OCI-LY7 (cell line): ENCODE measurements at regions of chr1 and their contacts with region 1.

Region 1: GRCh38 chr1:204806943-204807687 is 63.5 kb upstream of the NFASC start:
- DNase-seq: peak; percentile 91
- H3K4me3 ChIP-seq: peak overlapping the region; percentile 70
- H3K27ac ChIP-seq: no peak overlapping the region
- H3K4me1 ChIP-seq: peaks cover 27% of the 10 kb centered on the region
- CTCF ChIP-seq: peak; percentile 100

Region 2: DNA sequence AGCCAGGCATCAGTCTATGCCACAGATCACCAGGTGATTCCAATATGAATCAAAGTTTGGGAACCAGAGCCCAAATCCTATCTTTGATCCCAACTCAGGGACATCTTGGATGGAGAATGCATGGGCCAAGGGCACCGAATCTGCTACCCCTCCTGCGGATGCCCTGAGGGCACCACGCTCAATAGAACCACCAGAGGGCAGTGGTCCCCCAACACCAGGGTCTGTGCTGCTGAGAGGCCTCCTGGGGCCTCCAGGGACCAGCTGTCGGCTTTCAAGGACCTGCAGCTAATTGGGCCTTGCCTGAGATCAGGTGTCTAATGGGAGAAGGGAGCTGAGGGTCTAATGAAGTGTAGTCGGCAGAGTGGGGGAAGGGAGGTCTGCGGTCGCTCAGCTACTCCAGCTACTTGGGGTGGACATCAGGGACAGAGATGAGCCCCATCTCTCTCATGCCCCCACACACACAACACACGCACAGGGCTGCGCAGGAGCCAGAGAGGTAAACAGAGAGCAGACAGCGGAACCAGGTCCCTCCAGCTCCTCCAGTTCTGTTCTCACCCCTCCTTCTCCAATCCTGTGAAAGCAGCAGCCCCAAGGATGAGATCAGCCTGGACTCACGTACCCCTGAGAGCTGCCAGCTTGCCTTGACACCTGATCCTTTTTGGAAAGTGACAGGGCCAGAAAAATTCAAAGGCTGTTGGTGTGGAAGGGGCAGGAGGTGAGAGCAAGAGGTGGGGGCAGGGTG is 360.6 kb before region 1 on chr1:
- CTCF ChIA-PET with region 1: interaction called, 4 read pairs
- POLR2A ChIA-PET with region 1: no interaction called
- intact Hi-C with region 1: loop called (anchors 1 kb)
- DNase-seq: peak; percentile 88
- H3K4me3 ChIP-seq: no peak overlapping the region
- H3K27ac ChIP-seq: no peak overlapping the region
- H3K4me1 ChIP-seq: peaks cover 30% of the 10 kb centered on the region
- CTCF ChIP-seq: peak; percentile 83

Region 3: DNA sequence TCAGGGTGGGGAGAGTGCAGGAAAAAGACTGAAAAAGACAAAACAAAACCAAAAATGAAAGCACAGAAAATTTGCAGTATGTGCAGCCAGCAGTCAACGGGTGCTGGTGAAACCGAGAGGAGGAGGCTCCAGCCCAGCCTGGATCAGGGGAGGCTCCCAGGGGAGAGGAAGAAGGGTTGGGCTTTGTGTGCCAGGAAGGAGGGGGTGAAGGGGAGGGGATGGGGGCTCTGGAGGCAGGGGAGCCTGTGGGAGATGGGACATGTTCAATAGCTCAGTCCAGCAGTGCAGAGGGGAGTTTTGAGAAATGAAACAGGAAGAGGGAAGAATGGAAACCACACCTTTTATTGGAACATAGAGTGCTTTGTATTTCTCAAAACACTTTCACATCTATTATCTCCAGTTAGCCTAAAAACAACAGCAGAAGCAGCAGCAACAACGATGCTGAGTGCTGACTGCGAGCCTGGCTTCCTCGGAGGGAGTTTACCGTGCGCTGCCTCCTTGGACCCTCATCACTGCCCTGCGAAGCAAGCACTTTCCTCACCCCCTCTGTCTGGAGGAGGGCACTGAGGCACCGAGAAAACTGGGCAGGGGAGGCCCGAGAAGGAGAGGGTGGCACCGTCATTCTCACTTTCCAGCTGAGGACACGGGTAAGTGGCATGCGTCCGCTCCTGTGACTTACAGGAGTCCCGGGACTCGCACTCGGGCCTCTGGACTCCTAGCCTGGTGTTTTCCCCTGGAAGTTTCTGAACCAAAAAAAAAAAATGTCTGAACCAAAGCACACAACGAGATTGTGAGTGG is 228.0 kb before region 1 on chr1:
- CTCF ChIA-PET with region 1: interaction called, 3 read pairs
- POLR2A ChIA-PET with region 1: interaction called, 11 read pairs
- intact Hi-C with region 1: no loop called
- DNase-seq: peak; percentile 68
- H3K4me3 ChIP-seq: peak overlapping the region; percentile 64
- H3K27ac ChIP-seq: peak overlapping the region; percentile 77
- H3K4me1 ChIP-seq: peaks cover 55% of the 10 kb centered on the region
- CTCF ChIP-seq: no peak

Region 4: DNA sequence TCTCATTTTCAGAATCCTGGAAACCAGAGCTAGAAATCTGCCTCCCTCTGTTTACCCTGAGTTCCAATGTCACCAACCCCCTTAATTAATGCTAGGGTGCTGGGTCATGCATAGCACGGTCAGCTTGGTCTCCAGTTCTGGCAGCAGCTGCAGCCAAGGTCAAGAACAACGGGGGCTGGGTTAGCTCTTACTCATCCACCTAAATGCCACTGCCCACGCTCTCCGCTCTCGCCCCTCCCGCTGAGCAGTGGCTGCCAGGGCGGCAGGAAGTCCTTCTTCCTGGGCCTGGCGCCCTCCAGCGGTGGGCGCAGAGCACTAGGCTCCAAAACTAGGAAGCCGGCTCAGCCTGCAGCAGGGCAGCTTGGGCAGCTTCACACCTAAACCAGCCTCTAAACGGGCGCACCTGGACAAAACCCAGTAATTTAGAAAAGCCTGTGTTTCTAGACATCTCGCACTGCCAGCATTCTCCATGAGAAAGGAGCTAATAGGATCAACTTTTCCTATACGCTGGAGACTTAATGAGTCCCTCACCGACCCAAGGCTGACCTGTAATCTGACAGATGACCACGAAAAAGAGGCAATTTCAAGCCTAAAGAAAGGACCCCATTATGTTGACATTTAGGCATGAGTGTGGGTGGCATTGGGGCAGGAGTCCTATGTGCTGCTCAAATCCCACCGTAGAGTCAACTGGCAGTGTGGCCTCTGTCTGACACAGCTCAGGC is 43.2 kb before region 1 on chr1:
- CTCF ChIA-PET with region 1: interaction called, 8 read pairs
- POLR2A ChIA-PET with region 1: no interaction called
- intact Hi-C with region 1: loop called (anchors 1 kb)
- DNase-seq: peak; percentile 83
- H3K4me3 ChIP-seq: no peak overlapping the region
- H3K27ac ChIP-seq: no peak overlapping the region
- H3K4me1 ChIP-seq: peaks cover 5% of the 10 kb centered on the region
- CTCF ChIP-seq: peak; percentile 86

Region 5: GRCh38 chr1:204828338-204828850 is 21.3 kb after region 1 on chr1:
- CTCF ChIA-PET with region 1: no interaction called
- POLR2A ChIA-PET with region 1: no interaction called
- intact Hi-C with region 1: no loop called
- DNase-seq: no peak
- H3K4me3 ChIP-seq: no peak overlapping the region
- H3K27ac ChIP-seq: no peak overlapping the region
- H3K4me1 ChIP-seq: no peaks in the 10 kb centered on the region
- CTCF ChIP-seq: no peak

Region 6: GRCh38 chr1:205061665-205062069 is 254.6 kb after region 1 on chr1:
- CTCF ChIA-PET with region 1: interaction called, 3 read pairs
- POLR2A ChIA-PET with region 1: no interaction called
- intact Hi-C with region 1: loop called (anchors 2 kb)
- DNase-seq: peak; percentile 68
- H3K4me3 ChIP-seq: no peak overlapping the region
- H3K27ac ChIP-seq: no peak overlapping the region
- H3K4me1 ChIP-seq: no peaks in the 10 kb centered on the region
- CTCF ChIP-seq: peak; percentile 92